ENCODE measurements at regions of chr2 and their contacts with region 1.

Region 1: DNA sequence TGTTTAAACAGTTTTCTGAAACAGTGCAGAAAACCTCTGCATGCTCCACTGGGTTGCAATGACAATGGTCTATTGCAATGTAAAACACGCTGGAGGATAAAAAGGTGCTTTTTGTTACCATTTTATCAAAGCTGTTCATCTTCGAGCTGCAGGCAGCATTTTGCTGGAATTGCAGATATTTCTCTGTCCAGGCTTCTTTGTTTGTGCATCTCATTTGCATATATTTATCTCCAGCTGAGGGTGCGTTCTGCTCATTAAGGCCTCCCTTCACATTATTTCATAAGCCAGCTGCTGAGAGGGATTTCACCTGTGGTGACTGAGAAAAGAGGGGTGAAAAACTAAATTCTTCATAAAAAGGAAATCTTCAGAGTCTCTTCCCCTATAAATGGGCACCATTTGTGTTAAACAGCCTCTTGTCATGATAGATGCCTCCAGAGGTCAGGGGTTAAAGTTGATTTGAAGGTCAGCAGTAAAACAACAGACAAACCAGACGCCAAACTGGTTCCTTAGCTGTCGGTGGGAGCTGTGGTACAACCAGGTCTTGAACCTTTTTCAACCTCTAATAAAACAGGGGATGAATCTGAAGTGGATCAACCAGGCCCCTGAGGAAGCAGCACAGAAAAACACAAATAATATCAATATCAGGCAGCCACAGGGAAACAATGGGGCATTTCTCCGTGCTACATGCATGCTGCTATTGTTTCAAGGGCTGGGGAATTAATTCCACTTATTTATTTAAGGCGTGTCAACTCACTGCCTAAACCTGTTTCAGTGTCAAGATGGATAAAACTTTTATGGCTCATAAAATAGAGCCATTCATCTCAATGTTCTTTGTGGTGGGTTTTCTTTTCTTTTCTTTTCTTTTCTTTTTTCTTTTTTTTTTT is 265.1 kb downstream of the MEIS1 start:
- DNase-seq: no peak
- ATAC-seq: no peak
- H3K4me3 ChIP-seq: no peak overlapping the region
- H3K27ac ChIP-seq: peak overlapping the region in 1 of 2 donors; percentile 1
- H3K4me1 ChIP-seq: no peaks in the 10 kb centered on the region
- H3K27me3 ChIP-seq: no peaks in the 10 kb centered on the region
- CTCF ChIP-seq: no peak

Region 2: GRCh38 chr2:66587216-66587615 is 112.8 kb before region 1 on chr2:
- intact Hi-C with region 1: loop called in 1 of 2 experiments (anchors 10 kb)
- DNase-seq: no peak
- ATAC-seq: peak; percentile 49
- H3K4me3 ChIP-seq: no peak overlapping the region
- H3K27ac ChIP-seq: no peak overlapping the region
- H3K4me1 ChIP-seq: no peaks in the 10 kb centered on the region
- H3K27me3 ChIP-seq: peaks cover 13 to 52% of the 10 kb centered on the region in 2 donors
- CTCF ChIP-seq: peak in 1 of 2 donors; percentile 9

Measured in left lung (tissue), 14 donors.